ENCODE measurements at regions of chr13 and their contacts with region 1.

Region 1: DNA sequence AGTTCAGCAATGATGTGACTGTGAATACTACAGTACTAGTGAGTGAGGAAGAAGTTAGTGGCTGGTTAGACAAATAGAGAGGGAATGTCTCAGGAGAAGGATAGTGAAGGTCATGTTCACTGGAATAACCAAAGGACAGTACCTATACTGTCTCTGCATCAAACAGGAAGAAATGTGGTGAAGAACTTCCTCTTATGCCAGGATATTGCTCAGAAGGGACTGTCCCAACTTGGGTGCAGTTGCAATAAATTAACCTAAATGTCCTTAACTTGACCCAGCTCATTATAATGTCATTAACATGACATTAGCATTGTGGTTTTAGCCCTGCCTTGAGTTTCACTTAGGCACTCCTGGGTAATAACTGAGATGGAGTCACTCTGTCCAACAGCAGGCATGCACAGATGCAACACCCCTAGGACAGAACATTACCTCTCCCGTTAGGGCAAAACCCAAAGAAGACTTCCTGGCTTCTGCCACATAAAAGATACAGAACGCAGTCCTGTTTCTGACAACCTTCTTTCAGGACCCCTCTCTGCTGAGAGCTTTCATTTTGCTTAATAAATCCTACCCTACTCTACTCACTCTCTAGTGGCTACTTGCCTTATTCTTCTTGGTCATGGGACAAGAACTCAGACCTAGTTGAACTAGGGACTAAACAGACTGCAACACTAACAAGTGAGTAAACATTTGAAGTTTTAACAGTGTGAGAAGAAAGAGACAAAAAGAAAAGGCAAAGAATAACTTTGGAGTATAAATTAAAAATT is 1591.6 kb upstream of the MIR17HG start:
- DNase-seq: no peak
- ATAC-seq: no peak
- H3K4me3 Mint-ChIP-seq: no peak overlapping the region
- H3K27ac Mint-ChIP-seq: no peak overlapping the region
- H3K4me1 Mint-ChIP-seq: peaks cover 2% of the 10 kb centered on the region
- H3K27me3 Mint-ChIP-seq: no peaks in the 10 kb centered on the region

Region 2: GRCh38 chr13:90118467-90119071 is 362.7 kb after region 1 on chr13:
- CTCF ChIA-PET with region 1: no interaction called
- POLR2A ChIA-PET with region 1: no interaction called
- intact Hi-C with region 1: loop called in 1 of 2 experiments (anchors 10 kb)
- DNase-seq: no peak
- ATAC-seq: no peak
- H3K4me3 Mint-ChIP-seq: no peak overlapping the region
- H3K27ac Mint-ChIP-seq: no peak overlapping the region
- H3K4me1 Mint-ChIP-seq: no peaks in the 10 kb centered on the region
- H3K27me3 Mint-ChIP-seq: no peaks in the 10 kb centered on the region